Heart left ventricle (tissue), 16 donors: ENCODE measurements at regions of chr2 and their contacts with region 1.

Region 1: GRCh38 chr2:212548450-212548819 is 9.8 kb upstream of the ERBB4 start:
- DNase-seq: peak in 1 of 5 donors; percentile 22
- ATAC-seq: peak in 3 of 4 donors; percentile 73 to 85 (median 82)
- H3K4me3 ChIP-seq: no peak overlapping the region
- H3K27ac ChIP-seq: no peak overlapping the region
- H3K4me1 ChIP-seq: peaks cover 0 to 7% (median 0%) of the 10 kb centered on the region in 12 donors
- H3K27me3 ChIP-seq: no peaks in the 10 kb centered on the region
- CTCF ChIP-seq: peak; percentile 12 to 64 (median 50)
- POLR2A ChIP-seq: no peak

Region 2: GRCh38 chr2:211085056-211085680 is 1463.3 kb before region 1 on chr2:
- intact Hi-C with region 1: loop called in 1 of 10 experiments (anchors 5 kb)
- DNase-seq: no peak
- ATAC-seq: no peak
- H3K4me3 ChIP-seq: no peak overlapping the region
- H3K27ac ChIP-seq: no peak overlapping the region
- H3K4me1 ChIP-seq: no peaks in the 10 kb centered on the region
- H3K27me3 ChIP-seq: peaks cover 0 to 9% (median 0%) of the 10 kb centered on the region in 9 donors
- CTCF ChIP-seq: peak; percentile 30 to 63 (median 50)
- POLR2A ChIP-seq: no peak

Region 3: DNA sequence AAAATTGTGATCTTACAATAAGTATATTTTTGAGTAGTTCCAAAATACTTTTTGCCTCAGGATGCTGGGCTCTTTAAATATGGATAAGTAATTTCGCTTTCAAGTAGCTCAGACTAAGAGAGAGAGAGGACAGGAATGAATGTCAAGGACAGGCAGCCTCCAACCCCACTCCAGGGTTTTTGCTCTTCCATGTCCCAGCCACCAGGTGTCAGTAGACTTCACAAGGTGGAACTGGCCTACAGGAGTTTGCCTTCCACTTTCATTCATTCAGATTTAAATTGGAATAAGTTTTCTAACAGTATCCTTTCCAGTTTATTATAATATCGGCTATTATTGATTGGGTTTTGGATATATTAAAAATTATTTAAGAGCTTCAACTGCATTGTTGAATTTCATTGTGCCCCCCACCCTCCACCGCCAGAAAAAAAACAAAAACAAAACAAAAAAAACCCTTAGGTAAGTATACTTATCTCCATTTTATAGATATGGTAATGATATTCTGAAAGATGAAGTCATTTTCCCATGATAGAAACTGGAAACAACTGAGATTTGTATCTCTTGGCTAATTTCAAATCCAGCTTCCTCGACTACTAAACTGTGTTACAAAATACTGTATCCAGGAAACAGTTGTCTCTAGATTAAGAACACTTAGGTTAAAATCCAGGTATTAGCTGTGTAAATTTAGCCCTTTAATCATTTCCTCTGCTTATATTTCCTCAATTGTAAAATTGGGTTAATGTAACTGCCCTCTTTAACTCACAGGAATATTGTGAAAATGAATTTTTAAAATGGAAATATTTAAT is 802.9 kb before region 1 on chr2:
- intact Hi-C with region 1: loop called in 7 of 10 experiments (anchors 1 to 10 kb)
- DNase-seq: peak in 4 of 5 donors; percentile 22 to 48 (median 39)
- ATAC-seq: peak; percentile 85 to 94 (median 86)
- H3K4me3 ChIP-seq: no peak overlapping the region
- H3K27ac ChIP-seq: no peak overlapping the region
- H3K4me1 ChIP-seq: peaks cover 0 to 10% (median 0%) of the 10 kb centered on the region in 12 donors
- H3K27me3 ChIP-seq: no peaks in the 10 kb centered on the region
- CTCF ChIP-seq: peak; percentile 69 to 84 (median 78)
- POLR2A ChIP-seq: no peak

Region 4: DNA sequence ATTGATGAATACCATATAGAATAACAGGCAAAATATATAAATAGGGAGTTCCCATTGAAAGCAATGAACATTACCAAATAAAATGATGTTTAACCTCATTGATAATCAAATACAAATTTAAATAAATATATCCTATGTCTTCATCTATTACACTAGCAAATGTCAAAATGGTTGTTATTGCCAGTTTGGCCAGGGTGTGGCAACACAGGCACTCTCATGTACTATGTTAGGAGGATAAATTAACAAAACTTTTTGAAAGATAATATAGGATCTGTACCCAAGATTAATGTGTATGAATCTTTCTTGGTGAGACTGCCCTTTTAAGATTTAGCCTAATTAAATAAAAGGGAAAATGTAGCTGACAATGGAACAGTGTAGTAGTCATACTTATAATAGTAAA is 669.1 kb before region 1 on chr2:
- intact Hi-C with region 1: loop called in 2 of 10 experiments (anchors 10 kb)
- DNase-seq: no peak
- ATAC-seq: no peak
- H3K4me3 ChIP-seq: no peak overlapping the region
- H3K27ac ChIP-seq: no peak overlapping the region
- H3K4me1 ChIP-seq: no peaks in the 10 kb centered on the region
- H3K27me3 ChIP-seq: no peaks in the 10 kb centered on the region
- CTCF ChIP-seq: peak in 8 of 12 donors; percentile 14 to 39 (median 26)
- POLR2A ChIP-seq: no peak

Region 5: GRCh38 chr2:212005085-212005671 is 543.3 kb before region 1 on chr2:
- intact Hi-C with region 1: loop called in 1 of 10 experiments (anchors 10 kb)
- DNase-seq: peak in 3 of 5 donors; percentile 20 to 31 (median 30)
- ATAC-seq: peak in 3 of 4 donors; percentile 47 to 66 (median 50)
- H3K4me3 ChIP-seq: no peak overlapping the region
- H3K27ac ChIP-seq: no peak overlapping the region
- H3K4me1 ChIP-seq: no peaks in the 10 kb centered on the region
- H3K27me3 ChIP-seq: no peaks in the 10 kb centered on the region
- CTCF ChIP-seq: peak in 11 of 12 donors; percentile 21 to 55 (median 41)
- POLR2A ChIP-seq: no peak

Region 6: DNA sequence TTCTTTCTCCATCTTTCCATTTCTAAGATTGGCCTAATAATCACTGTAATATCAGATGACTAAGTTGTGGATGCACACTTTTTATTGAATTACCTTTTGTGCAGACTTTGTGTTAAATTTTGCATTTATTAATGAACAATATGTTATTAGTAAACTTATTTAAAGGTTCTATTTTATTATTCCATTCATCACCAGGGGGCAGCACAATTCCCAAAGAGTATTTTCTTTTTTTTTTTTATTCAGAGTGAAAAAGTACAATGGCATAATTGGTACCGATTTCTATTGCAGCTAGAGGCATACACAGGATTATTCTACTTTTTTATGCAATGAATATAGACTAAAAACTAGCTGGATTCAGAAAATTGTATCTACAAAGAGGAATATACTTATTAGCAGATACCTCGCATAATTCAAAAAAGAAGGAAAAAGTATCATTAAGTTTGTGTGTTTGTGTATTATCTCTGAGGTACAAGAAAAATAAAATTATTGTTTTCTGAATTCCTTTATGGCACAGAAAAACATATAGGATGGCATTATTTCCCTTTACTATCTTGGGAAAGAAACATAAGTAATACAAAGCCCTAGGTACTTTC is 400.4 kb before region 1 on chr2:
- intact Hi-C with region 1: loop called in 3 of 10 experiments (anchors 10 kb)
- DNase-seq: no peak
- ATAC-seq: no peak
- H3K4me3 ChIP-seq: no peak overlapping the region
- H3K27ac ChIP-seq: no peak overlapping the region
- H3K4me1 ChIP-seq: peaks cover 0 to 5% (median 0%) of the 10 kb centered on the region in 12 donors
- H3K27me3 ChIP-seq: no peaks in the 10 kb centered on the region
- CTCF ChIP-seq: peak in 11 of 12 donors; percentile 6 to 56 (median 41)
- POLR2A ChIP-seq: no peak